ENCODE measurements at regions of chr18 and their contacts with region 1.

Region 1: DNA sequence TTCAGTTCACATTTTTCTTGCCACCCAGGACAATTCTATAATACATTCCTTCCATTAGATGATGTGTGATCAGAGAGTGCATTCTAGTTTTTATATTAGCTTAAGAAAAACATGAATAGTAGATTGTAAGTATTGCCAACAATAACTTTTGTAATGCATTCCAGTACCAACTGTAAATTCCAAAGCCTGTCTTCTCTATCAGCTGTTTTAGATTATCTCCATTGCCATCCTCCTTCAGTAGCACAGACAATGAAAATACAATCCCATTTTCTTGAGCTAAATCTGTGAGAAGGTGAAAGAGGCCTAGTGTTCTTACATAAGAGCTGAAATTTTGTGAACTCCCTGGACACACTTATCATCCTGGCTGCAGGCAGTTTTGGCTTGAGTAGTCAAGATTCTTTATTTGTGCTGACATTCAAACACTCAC is 103.9 kb downstream of the CCBE1 start:
- DNase-seq: no peak
- H3K4me3 ChIP-seq: no peak overlapping the region
- H3K4me3 Mint-ChIP-seq: no peak overlapping the region
- H3K27ac Mint-ChIP-seq: no peak overlapping the region
- H3K4me1 ChIP-seq: no peaks in the 10 kb centered on the region
- H3K4me1 Mint-ChIP-seq: no peaks in the 10 kb centered on the region
- H3K27me3 ChIP-seq: no peaks in the 10 kb centered on the region
- H3K27me3 Mint-ChIP-seq: peaks cover 18% of the 10 kb centered on the region
- CTCF ChIP-seq: no peak

Region 2: GRCh38 chr18:59899298-59900221 is 306.3 kb after region 1 on chr18 and contains the start of gene PMAIP1:
- CTCF ChIA-PET with region 1: interaction called, 10 read pairs
- POLR2A ChIA-PET with region 1: no interaction called
- intact Hi-C with region 1: no loop called
- DNase-seq: peak; percentile 70 to 72
- H3K4me3 ChIP-seq: peak within 1 kb of the TSS; percentile 54
- H3K4me3 Mint-ChIP-seq: peak within 1 kb of the TSS; percentile 70
- H3K27ac Mint-ChIP-seq: no peak within 1 kb of the TSS
- H3K4me1 ChIP-seq: no peaks in the 10 kb centered on the region
- H3K4me1 Mint-ChIP-seq: no peaks in the 10 kb centered on the region
- H3K27me3 ChIP-seq: no peaks in the 10 kb centered on the region
- H3K27me3 Mint-ChIP-seq: no peaks in the 10 kb centered on the region
- CTCF ChIP-seq: no peak
- total RNA-seq, gene PMAIP1: 2.3 and 2.4 TPM in 2 replicates